AG04450 (cell line): ENCODE measurements at regions of chr17 and their contacts with region 1.

Region 1: GRCh38 chr17:44070455-44071197 is at the start of gene G6PC3:
- DNase-seq: peak; percentile 95
- H3K4me3 ChIP-seq: peak within 1 kb of the TSS; percentile 79
- H3K27ac ChIP-seq: peak within 1 kb of the TSS; percentile 93
- H3K27me3 ChIP-seq: no peaks in the 10 kb centered on the region
- CTCF ChIP-seq: no peak
- polyA plus RNA-seq, gene G6PC3: 69.8 and 87.4 TPM in 2 replicates

Region 2: GRCh38 chr17:43400943-43401692 is 669.5 kb before region 1 on chr17:
- CTCF ChIA-PET with region 1: no interaction called
- POLR2A ChIA-PET with region 1: interaction called, 10 read pairs
- DNase-seq: peak; percentile 43
- H3K4me3 ChIP-seq: peak overlapping the region; percentile 74
- H3K27ac ChIP-seq: peak overlapping the region; percentile 52
- H3K27me3 ChIP-seq: no peaks in the 10 kb centered on the region
- CTCF ChIP-seq: no peak

Region 3: DNA sequence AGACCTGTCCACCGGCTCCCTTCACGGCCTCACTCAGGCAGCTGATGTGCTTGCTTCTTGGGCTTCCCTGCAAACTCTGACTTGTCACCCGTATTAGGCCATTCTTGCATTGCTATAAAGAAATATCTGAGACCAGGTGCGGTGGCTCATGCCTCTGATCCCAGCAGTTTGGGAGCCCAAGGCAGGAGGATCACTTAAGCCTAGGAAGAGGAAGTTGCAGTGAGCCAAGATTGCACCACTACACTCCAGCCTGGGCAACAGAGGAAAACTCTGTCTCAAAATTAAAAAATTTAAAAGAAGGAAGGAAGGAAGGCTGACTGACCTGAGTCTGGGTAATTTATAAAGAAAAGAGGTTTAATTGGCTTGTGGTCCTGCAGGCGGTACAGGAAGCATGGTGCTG is 329.0 kb before region 1 on chr17:
- CTCF ChIA-PET with region 1: no interaction called
- POLR2A ChIA-PET with region 1: interaction called, 11 read pairs
- DNase-seq: no peak
- H3K4me3 ChIP-seq: no peak overlapping the region
- H3K27ac ChIP-seq: no peak overlapping the region
- H3K27me3 ChIP-seq: peaks cover 2% of the 10 kb centered on the region
- CTCF ChIP-seq: no peak

Region 4: GRCh38 chr17:44033861-44034408 is 36.7 kb before region 1 on chr17:
- CTCF ChIA-PET with region 1: no interaction called
- POLR2A ChIA-PET with region 1: no interaction called
- DNase-seq: no peak
- H3K4me3 ChIP-seq: no peak overlapping the region
- H3K27ac ChIP-seq: no peak overlapping the region
- H3K27me3 ChIP-seq: no peaks in the 10 kb centered on the region
- CTCF ChIP-seq: no peak

Region 5: GRCh38 chr17:44086364-44087311 is 16.0 kb after region 1 on chr17:
- CTCF ChIA-PET with region 1: interaction called, 6 read pairs
- POLR2A ChIA-PET with region 1: interaction called, 11 read pairs
- DNase-seq: peak; percentile 75
- H3K4me3 ChIP-seq: no peak overlapping the region; the same call in 1 of the 2 replicates
- H3K27ac ChIP-seq: peak overlapping the region; percentile 81
- H3K27me3 ChIP-seq: no peaks in the 10 kb centered on the region
- CTCF ChIP-seq: no peak

Region 6: GRCh38 chr17:44110823-44111633 is 40.4 kb after region 1 on chr17:
- CTCF ChIA-PET with region 1: interaction called, 6 read pairs
- POLR2A ChIA-PET with region 1: interaction called, 10 read pairs
- DNase-seq: no peak
- H3K4me3 ChIP-seq: peak overlapping the region; percentile 57
- H3K27ac ChIP-seq: peak overlapping the region; percentile 47
- H3K27me3 ChIP-seq: no peaks in the 10 kb centered on the region
- CTCF ChIP-seq: no peak; the same call in 1 of the 2 replicates

Region 7: GRCh38 chr17:44132275-44132821 is 61.7 kb after region 1 on chr17:
- CTCF ChIA-PET with region 1: no interaction called
- POLR2A ChIA-PET with region 1: no interaction called
- DNase-seq: no peak
- H3K4me3 ChIP-seq: no peak overlapping the region
- H3K27ac ChIP-seq: no peak overlapping the region
- H3K27me3 ChIP-seq: no peaks in the 10 kb centered on the region
- CTCF ChIP-seq: no peak